CD4-positive, alpha-beta memory T cell (primary cell): ENCODE measurements at regions of chr10 and their contacts with region 1.

Region 1: GRCh38 chr10:91908337-91909116 is 759 bp downstream of the FGFBP3 start:
- DNase-seq: peak; percentile 71 to 77 (median 77)
- H3K4me3 ChIP-seq: peak overlapping the region; percentile 68 to 72
- H3K4me3 Mint-ChIP-seq: peak overlapping the region; percentile 89 to 97 (median 93)
- H3K27ac ChIP-seq: peak overlapping the region; percentile 67
- H3K27ac Mint-ChIP-seq: peak overlapping the region; percentile 74 to 94 (median 85)
- H3K4me1 ChIP-seq: peaks cover 25% of the 10 kb centered on the region
- H3K4me1 Mint-ChIP-seq: peaks cover 15 to 26% (median 21%) of the 10 kb centered on the region in 4 donors
- H3K27me3 ChIP-seq: no peaks in the 10 kb centered on the region
- H3K27me3 Mint-ChIP-seq: peaks cover 0 to 4% of the 10 kb centered on the region in 2 donors

Region 2: GRCh38 chr10:91006001-91006751 is 902.4 kb before region 1 on chr10:
- CTCF ChIA-PET with region 1: no interaction called
- POLR2A ChIA-PET with region 1: no interaction called
- intact Hi-C with region 1: loop called (anchors 1 kb)
- DNase-seq: peak; percentile 60 to 73 (median 67)
- H3K4me3 ChIP-seq: no peak overlapping the region
- H3K4me3 Mint-ChIP-seq: peak overlapping the region; percentile 40 to 89 (median 73)
- H3K27ac ChIP-seq: no peak overlapping the region
- H3K27ac Mint-ChIP-seq: peak overlapping the region; percentile 30 to 88 (median 74)
- H3K4me1 ChIP-seq: peaks cover 18% of the 10 kb centered on the region
- H3K4me1 Mint-ChIP-seq: peaks cover 11 to 21% (median 16%) of the 10 kb centered on the region in 4 donors
- H3K27me3 ChIP-seq: no peaks in the 10 kb centered on the region
- H3K27me3 Mint-ChIP-seq: peaks cover 0 to under 1% of the 10 kb centered on the region in 2 donors

Region 3: GRCh38 chr10:91409869-91410637 is 498.5 kb before region 1 on chr10 and contains the start of gene HECTD2:
- CTCF ChIA-PET with region 1: no interaction called
- POLR2A ChIA-PET with region 1: interaction called, 12 read pairs
- intact Hi-C with region 1: loop called (anchors 2 kb)
- DNase-seq: peak; percentile 78 to 90 (median 88)
- H3K4me3 ChIP-seq: peak within 1 kb of the TSS; percentile 88 to 92
- H3K4me3 Mint-ChIP-seq: peak within 1 kb of the TSS; percentile 88 to 97 (median 91)
- H3K27ac ChIP-seq: peak within 1 kb of the TSS; percentile 74
- H3K27ac Mint-ChIP-seq: peak within 1 kb of the TSS; percentile 78 to 97 (median 95)
- H3K4me1 ChIP-seq: peaks cover 20% of the 10 kb centered on the region
- H3K4me1 Mint-ChIP-seq: peaks cover 7 to 15% (median 11%) of the 10 kb centered on the region in 4 donors
- H3K27me3 ChIP-seq: no peaks in the 10 kb centered on the region
- H3K27me3 Mint-ChIP-seq: peaks cover 0 to under 1% of the 10 kb centered on the region in 2 donors
- total RNA-seq, gene HECTD2: 2.6 to 2.7 TPM

Region 4: DNA sequence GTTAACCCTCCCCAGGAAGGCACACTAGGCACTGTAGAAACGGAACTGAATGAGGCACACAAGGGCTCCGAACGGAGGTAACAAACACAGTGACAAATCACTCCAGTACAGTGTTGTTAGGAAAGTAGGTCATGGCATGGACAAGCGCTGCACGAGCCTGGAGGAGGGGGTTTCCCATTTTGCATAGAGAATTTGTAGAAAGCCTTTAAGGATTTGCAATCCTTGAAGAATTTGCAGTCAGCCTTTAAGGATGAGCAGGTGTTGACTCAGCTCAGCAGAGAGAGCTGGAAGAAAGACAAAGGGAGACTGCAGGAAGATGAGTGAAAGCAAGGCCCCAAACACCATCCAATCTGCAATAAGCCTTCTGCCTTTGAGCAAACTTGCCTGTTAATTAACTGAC is 224.6 kb before region 1 on chr10:
- CTCF ChIA-PET with region 1: no interaction called
- POLR2A ChIA-PET with region 1: no interaction called
- intact Hi-C with region 1: no loop called
- DNase-seq: no peak
- H3K4me3 ChIP-seq: no peak overlapping the region
- H3K4me3 Mint-ChIP-seq: no peak overlapping the region
- H3K27ac ChIP-seq: no peak overlapping the region
- H3K27ac Mint-ChIP-seq: no peak overlapping the region
- H3K4me1 ChIP-seq: no peaks in the 10 kb centered on the region
- H3K4me1 Mint-ChIP-seq: no peaks in the 10 kb centered on the region
- H3K27me3 ChIP-seq: no peaks in the 10 kb centered on the region
- H3K27me3 Mint-ChIP-seq: no peaks in the 10 kb centered on the region

Region 5: DNA sequence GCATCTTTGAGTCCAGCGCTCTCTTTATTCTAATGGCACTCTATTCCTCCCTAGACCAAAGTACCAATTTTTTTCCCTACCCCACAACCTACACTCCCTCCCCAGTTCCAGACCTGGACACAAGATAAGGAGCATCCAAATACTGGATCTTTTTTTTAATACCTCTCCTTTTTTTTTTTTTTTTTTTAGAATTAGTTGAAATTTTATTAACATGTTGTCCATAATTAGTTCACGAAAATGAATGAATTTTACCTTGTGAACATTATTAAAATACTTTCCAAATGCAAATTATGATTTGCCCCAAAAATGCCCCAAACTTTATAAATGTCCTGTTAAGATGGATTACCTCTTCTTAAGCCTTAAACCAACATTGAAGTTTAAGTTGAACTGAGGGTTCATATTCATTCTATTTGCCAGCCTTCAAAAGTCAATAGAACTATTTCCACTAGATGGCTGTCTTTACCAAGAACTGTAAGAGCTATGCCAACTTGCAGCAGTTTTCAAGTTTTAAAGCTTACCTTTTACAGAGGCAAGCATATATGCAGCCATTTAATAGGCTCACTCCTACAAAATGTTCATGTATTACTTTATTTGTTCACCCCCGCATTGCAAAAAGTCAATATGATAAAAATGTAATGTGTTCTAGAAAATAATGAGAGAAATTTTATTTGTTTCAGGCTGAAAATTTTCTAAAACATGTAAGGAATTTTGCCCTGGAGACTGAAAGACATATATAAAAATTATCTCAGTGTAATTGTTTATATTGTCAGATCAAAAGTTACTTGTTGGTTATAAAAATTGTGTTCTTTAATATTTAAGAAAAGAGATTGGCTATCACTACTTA is 150.0 kb before region 1 on chr10:
- CTCF ChIA-PET with region 1: interaction called, 110 read pairs
- POLR2A ChIA-PET with region 1: interaction called, 9 read pairs
- intact Hi-C with region 1: loop called (anchors 1 kb)
- DNase-seq: peak in 4 of 5 donors; percentile 49 to 62 (median 55)
- H3K4me3 ChIP-seq: no peak overlapping the region
- H3K4me3 Mint-ChIP-seq: no peak overlapping the region
- H3K27ac ChIP-seq: no peak overlapping the region
- H3K27ac Mint-ChIP-seq: no peak overlapping the region
- H3K4me1 ChIP-seq: no peaks in the 10 kb centered on the region
- H3K4me1 Mint-ChIP-seq: peaks cover 0 to 2% (median 0%) of the 10 kb centered on the region in 4 donors
- H3K27me3 ChIP-seq: no peaks in the 10 kb centered on the region
- H3K27me3 Mint-ChIP-seq: peaks cover 11% of the 10 kb centered on the region in 2 donors

Region 6: GRCh38 chr10:91887272-91888076 is 21.1 kb before region 1 on chr10:
- CTCF ChIA-PET with region 1: interaction called, 10 read pairs
- POLR2A ChIA-PET with region 1: interaction called, 15 read pairs
- intact Hi-C with region 1: loop called (anchors 1 kb)
- DNase-seq: peak in 4 of 5 donors; percentile 10 to 27 (median 14)
- H3K4me3 ChIP-seq: peak overlapping the region; percentile 65 to 68
- H3K4me3 Mint-ChIP-seq: peak overlapping the region; percentile 82 to 96 (median 90)
- H3K27ac ChIP-seq: no peak overlapping the region
- H3K27ac Mint-ChIP-seq: peak overlapping the region in 4 of 7 donors; percentile 12 to 79 (median 50)
- H3K4me1 ChIP-seq: peaks cover 9% of the 10 kb centered on the region
- H3K4me1 Mint-ChIP-seq: peaks cover 3 to 10% (median 7%) of the 10 kb centered on the region in 4 donors
- H3K27me3 ChIP-seq: no peaks in the 10 kb centered on the region
- H3K27me3 Mint-ChIP-seq: peaks cover 1 to 2% of the 10 kb centered on the region in 2 donors

Region 7: GRCh38 chr10:92592761-92593618 is 684.5 kb after region 1 on chr10 and contains the start of gene KIF11:
- CTCF ChIA-PET with region 1: no interaction called
- POLR2A ChIA-PET with region 1: interaction called, 3 read pairs
- intact Hi-C with region 1: loop called (anchors 5 kb)
- DNase-seq: peak; percentile 93 to 97 (median 93)
- H3K4me3 ChIP-seq: peak within 1 kb of the TSS; percentile 65 to 76
- H3K4me3 Mint-ChIP-seq: peak within 1 kb of the TSS; percentile 93 to 99 (median 98)
- H3K27ac ChIP-seq: peak within 1 kb of the TSS; percentile 85
- H3K27ac Mint-ChIP-seq: peak within 1 kb of the TSS; percentile 99 to 100 (median 100)
- H3K4me1 ChIP-seq: peaks cover 49% of the 10 kb centered on the region
- H3K4me1 Mint-ChIP-seq: peaks cover 27 to 63% (median 36%) of the 10 kb centered on the region in 4 donors
- H3K27me3 ChIP-seq: no peaks in the 10 kb centered on the region
- H3K27me3 Mint-ChIP-seq: no peaks in the 10 kb centered on the region
- total RNA-seq, gene KIF11: 2.0 to 2.1 TPM